A673 (cell line): ENCODE measurements at regions of chr19 and their contacts with region 1.

Region 1: GRCh38 chr19:1789261-1790041 is 22.6 kb downstream of the ATP8B3 start:
- DNase-seq: no peak
- H3K4me3 ChIP-seq: peak overlapping the region; percentile 12
- H3K27ac ChIP-seq: no peak overlapping the region
- H3K4me1 ChIP-seq: no peaks in the 10 kb centered on the region
- H3K27me3 ChIP-seq: peaks cover 8% of the 10 kb centered on the region
- CTCF ChIP-seq: no peak

Region 2: GRCh38 chr19:1605236-1606137 is 184.0 kb before region 1 on chr19 and contains the start of gene UQCR11:
- CTCF ChIA-PET with region 1: no interaction called
- POLR2A ChIA-PET with region 1: no interaction called
- intact Hi-C with region 1: loop called (anchors 10 kb)
- DNase-seq: peak; percentile 97
- H3K4me3 ChIP-seq: peak within 1 kb of the TSS; percentile 83
- H3K27ac ChIP-seq: peak within 1 kb of the TSS; percentile 87
- H3K4me1 ChIP-seq: peaks cover 6% of the 10 kb centered on the region
- H3K27me3 ChIP-seq: no peaks in the 10 kb centered on the region
- CTCF ChIP-seq: peak; percentile 70
- total RNA-seq, gene UQCR11: 256 and 258 TPM in 2 replicates

Region 3: GRCh38 chr19:1668486-1669270 is 120.8 kb before region 1 on chr19:
- CTCF ChIA-PET with region 1: no interaction called
- POLR2A ChIA-PET with region 1: no interaction called
- intact Hi-C with region 1: no loop called
- DNase-seq: no peak
- H3K4me3 ChIP-seq: peak overlapping the region; percentile 18
- H3K27ac ChIP-seq: peak overlapping the region; percentile 11
- H3K4me1 ChIP-seq: peaks cover 26% of the 10 kb centered on the region
- H3K27me3 ChIP-seq: no peaks in the 10 kb centered on the region
- CTCF ChIP-seq: no peak

Region 4: DNA sequence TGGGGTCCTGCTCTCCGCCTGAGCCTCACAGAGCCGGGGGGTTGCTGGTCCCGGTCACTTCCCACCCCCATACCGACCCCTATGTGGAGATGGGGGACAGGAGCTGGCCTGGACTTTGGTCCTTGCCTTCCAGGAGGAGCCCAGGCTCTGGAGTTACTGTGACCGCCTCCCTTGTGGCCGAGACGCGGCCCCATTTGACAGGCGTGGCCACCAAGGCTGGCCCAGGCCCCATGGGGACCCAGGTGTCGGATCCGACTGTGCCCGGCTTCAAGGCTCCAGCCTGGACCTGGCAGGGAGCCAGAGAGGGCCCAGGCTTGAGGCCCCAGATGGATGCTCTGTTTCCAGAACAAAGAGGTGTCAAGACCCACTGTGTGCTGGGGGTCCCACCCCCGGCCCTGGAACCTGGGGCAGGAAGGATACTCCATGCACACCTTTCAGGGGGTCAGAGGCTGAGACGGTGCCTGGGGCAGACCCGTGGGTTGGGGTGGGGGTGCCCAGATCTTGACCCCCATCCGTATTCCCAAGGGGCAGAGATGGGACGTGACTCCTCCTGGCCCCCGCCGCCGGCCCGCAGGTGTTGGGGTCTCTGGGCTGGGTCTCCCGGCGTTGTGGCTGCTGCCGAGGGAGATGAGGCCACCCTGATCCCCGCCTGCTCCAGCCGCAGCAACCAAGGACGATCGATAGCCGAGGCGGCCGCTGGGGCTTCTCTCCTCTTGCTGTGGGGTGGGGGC is 89.3 kb before region 1 on chr19:
- CTCF ChIA-PET with region 1: no interaction called
- POLR2A ChIA-PET with region 1: interaction called, 12 read pairs
- intact Hi-C with region 1: no loop called
- DNase-seq: no peak
- H3K4me3 ChIP-seq: no peak overlapping the region
- H3K27ac ChIP-seq: no peak overlapping the region
- H3K4me1 ChIP-seq: no peaks in the 10 kb centered on the region
- H3K27me3 ChIP-seq: peaks cover 25% of the 10 kb centered on the region
- CTCF ChIP-seq: no peak